Right cardiac atrium (tissue), 5 donors: ENCODE measurements at regions of chr5 and their contacts with region 1.

Region 1: DNA sequence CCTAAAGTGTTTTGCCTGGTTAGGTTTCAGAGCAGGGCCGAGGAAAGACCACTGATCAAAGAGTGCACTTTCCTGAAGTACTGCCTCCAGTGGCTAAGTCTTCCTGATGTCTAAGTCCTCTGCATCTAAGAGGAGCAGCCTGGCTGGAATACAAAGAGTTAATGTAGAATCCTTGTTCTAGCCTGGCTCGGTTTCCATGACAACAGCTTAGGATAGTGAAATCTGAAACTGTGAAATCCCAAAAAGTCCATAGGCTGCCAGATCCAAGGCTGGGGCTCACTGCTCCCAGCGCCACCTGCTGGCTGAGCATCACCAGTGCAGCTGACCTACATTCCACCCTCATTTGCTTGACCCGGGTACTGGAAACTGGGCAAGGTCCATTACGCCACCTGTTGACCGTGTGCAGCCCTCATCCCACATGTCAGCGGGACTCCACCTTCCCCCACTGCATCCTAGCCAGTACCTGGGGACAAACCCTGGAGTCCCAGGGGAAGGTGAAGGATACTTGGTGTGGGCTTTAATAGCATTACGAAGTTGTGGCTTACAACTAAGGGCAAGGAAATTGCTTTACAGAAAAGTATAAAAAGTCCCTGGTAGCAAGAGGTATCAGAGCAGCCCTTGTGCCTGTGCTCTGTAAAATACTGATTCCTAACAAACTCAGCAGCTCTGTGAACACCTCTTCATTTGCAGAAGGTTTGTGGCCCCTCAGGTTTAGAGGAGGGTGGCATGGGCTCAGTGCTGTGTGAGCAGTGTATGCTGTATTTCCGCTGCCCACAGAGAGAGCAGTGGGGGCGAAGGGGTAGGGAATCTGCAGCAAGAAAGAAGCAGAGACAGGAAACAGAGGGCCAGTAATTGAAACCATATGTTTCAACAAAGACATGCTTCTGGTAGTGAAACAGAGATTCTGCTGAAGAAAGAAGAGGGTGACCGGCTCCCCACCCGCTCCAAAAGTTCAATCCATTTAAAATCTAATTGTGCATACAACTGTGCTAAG is 36.0 kb downstream of the PCDHGC5 start:
- DNase-seq: peak; percentile 82 to 94 (median 93)
- ATAC-seq: peak; percentile 56 to 81
- H3K4me3 ChIP-seq: no peak overlapping the region
- H3K27ac ChIP-seq: peak overlapping the region; percentile 49
- H3K4me1 ChIP-seq: peaks cover 9% of the 10 kb centered on the region
- H3K27me3 ChIP-seq: no peaks in the 10 kb centered on the region

Region 2: GRCh38 chr5:141412854-141413539 is 111.9 kb before region 1 on chr5 and contains the start of gene PCDHGA10:
- intact Hi-C with region 1: loop called in 1 of 4 experiments (anchors 10 kb)
- DNase-seq: no peak
- ATAC-seq: peak in 1 of 2 donors; percentile 50
- H3K4me3 ChIP-seq: peak within 1 kb of the TSS; percentile 32
- H3K27ac ChIP-seq: no peak within 1 kb of the TSS
- H3K4me1 ChIP-seq: no peaks in the 10 kb centered on the region
- H3K27me3 ChIP-seq: no peaks in the 10 kb centered on the region
- total RNA-seq, gene PCDHGA10: 3.9 to 5.3 (median 4.5) TPM

Region 3: DNA sequence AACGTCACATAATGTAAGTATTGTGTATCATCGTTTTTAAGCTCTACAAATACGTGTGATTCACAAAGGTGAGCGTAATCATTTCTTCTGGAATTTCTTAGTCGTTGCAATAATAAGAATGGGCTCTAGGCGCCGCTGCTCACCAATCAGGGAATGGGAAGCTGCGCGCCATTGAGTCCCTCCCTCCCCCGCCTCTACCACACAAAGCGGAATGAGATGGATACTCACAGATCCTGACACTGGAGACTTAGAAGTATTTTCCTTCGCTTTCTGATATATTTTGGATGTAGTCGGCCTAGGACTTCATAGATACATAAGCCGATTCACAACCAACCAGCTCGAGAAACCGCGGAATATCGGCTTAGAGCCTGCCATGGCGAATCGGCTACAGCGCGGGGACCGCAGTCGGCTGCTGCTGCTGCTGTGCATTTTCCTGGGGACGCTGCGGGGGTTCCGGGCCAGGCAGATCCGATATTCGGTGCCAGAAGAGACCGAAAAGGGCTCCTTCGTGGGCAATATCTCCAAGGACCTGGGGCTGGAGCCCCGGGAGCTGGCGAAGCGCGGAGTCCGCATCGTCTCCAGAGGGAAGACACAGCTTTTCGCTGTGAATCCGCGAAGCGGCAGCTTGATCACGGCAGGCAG is 103.9 kb before region 1 on chr5 and contains the start of gene PCDHGA11:
- intact Hi-C with region 1: loop called in 3 of 4 experiments (anchors 10 kb)
- DNase-seq: peak in 1 of 3 donors; percentile 56
- ATAC-seq: peak in 1 of 2 donors; percentile 39
- H3K4me3 ChIP-seq: peak within 1 kb of the TSS; percentile 49
- H3K27ac ChIP-seq: no peak within 1 kb of the TSS
- H3K4me1 ChIP-seq: peaks cover 2% of the 10 kb centered on the region
- H3K27me3 ChIP-seq: no peaks in the 10 kb centered on the region
- total RNA-seq, gene PCDHGA11: 3.1 to 4.2 (median 3.6) TPM

Region 4: DNA sequence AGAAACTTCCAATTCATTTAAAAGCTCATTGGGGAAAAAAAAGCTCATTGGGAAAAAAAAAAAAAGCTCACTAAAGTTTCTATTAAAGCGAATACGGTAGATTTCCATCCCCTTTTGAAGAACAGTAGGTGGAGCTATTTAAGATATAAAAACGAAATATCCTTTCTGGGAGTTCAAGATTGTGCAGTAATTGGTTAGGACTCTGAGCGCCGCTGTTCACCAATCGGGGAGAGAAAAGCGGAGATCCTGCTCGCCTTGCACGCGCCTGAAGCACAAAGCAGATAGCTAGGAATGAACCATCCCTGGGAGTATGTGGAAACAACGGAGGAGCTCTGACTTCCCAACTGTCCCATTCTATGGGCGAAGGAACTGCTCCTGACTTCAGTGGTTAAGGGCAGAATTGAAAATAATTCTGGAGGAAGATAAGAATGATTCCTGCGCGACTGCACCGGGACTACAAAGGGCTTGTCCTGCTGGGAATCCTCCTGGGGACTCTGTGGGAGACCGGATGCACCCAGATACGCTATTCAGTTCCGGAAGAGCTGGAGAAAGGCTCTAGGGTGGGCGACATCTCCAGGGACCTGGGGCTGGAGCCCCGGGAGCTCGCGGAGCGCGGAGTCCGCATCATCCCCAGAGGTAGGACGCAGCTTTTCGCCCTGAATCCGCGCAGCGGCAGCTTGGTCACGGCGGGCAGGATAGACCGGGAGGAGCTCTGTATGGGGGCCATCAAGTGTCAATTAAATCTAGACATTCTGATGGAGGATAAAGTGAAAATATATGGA is 94.4 kb before region 1 on chr5 and contains the start of gene PCDHGA12:
- intact Hi-C with region 1: loop called in 3 of 4 experiments (anchors 5 to 10 kb)
- DNase-seq: peak; percentile 66 to 81 (median 75)
- ATAC-seq: peak; percentile 86 to 89
- H3K4me3 ChIP-seq: peak within 1 kb of the TSS; percentile 1
- H3K27ac ChIP-seq: no peak within 1 kb of the TSS
- H3K4me1 ChIP-seq: no peaks in the 10 kb centered on the region
- H3K27me3 ChIP-seq: no peaks in the 10 kb centered on the region
- total RNA-seq, gene PCDHGA12: 4.8 to 7.1 (median 5.6) TPM

Region 5: DNA sequence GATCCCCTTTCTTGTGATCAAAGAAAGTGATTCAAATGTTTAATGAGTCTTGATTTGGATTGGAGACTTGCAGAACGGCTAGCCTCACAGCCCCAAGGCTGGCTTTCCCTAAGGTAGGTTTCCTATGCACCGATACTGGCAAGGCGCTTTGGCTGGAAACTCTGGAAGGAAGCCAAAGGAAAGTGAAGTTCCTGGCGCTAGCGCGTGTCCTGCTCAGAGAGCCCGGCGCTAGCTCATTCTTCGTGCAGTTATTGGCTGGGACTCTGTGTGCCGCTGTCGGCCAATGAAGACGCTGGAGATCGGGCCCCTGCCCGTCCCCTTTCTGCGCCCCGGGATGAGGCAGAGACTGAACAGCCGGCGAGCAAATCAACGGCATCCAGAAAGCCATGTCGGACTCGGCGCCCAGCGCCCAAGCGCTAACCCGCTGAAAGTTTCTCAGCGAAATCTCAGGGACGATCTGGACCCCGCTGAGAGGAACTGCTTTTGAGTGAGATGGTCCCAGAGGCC is 49.2 kb before region 1 on chr5 and contains the start of gene PCDHGC3:
- intact Hi-C with region 1: loop called (anchors 2 to 10 kb)
- DNase-seq: peak; percentile 94 to 97 (median 96)
- ATAC-seq: peak; percentile 99 to 100
- H3K4me3 ChIP-seq: peak within 1 kb of the TSS; percentile 72
- H3K27ac ChIP-seq: peak within 1 kb of the TSS; percentile 90
- H3K4me1 ChIP-seq: peaks cover 9% of the 10 kb centered on the region
- H3K27me3 ChIP-seq: no peaks in the 10 kb centered on the region
- total RNA-seq, gene PCDHGC3: 19.6 to 42.5 (median 33.5) TPM